GM13976 (cell line): ENCODE measurements at regions of chr5 and their contacts with region 1.

Region 1: DNA sequence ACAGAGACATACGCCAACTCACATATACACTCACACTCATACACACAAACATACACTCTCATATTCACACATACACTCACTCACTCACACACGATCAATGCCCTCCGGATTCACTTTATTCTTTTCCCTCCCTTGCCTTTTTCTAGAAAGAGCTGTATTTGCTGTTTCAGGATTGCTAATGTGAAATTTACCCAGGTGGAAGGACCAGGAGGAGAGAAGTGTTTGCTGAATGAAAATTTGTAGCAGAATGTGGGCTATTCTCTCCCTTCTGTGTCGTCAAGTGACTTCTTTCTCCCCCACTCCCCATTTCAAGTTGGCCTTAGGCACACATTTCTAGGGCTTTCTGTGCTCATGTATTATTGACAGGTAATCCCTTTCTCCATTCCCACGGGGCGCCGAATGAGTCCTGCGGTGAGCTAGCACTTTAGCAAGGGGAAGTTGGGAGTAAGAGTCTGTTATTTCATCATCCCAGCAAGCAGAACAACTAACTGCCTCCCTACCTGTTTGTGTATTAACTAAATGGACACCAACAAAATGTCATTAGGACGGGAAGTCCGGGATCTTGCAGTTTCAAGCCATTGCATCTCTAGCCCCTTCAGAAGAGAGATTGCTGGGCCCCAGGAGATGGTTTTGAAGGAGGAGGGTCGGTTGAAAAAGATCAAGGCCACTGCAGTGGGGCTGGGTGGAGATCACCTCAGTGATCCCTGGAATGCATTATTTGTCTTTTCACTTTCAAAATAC is 97.1 kb upstream of the TAF11L2 start:
- DNase-seq: no peak
- CTCF ChIP-seq: no peak

Region 2: DNA sequence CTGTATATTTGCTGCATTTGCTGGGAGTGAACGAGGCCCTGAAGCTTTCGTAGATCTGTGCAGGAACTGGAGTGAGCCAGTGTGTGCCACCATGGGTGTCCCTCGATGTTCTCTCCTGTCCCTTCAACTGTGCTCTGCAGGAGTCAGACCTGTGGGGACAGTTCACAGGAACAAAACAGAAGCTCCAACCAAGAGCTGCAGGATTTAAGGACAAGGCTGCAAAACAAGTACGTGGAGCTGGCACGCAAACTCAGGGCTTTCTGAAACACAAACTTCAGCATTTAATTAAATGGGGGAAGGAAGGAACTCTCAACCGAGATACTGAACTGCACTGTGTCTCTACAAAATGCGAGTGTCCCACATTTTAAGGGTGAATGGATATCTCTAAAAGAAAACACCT is 159.3 kb before region 1 on chr5:
- in situ Hi-C with region 1: no loop called
- DNase-seq: no peak
- CTCF ChIP-seq: no peak

Region 3: GRCh38 chr5:17316970-17317459 is 83.9 kb before region 1 on chr5:
- in situ Hi-C with region 1: loop called (anchors 10 kb)
- DNase-seq: peak; percentile 52
- CTCF ChIP-seq: no peak